ENCODE measurements at regions of chr5 and their contacts with region 1.

Region 1: GRCh38 chr5:134758504-134759341 is at the start of gene DDX46:
- DNase-seq: peak; percentile 89 to 97 (median 93)
- ATAC-seq: peak; percentile 99
- H3K4me3 ChIP-seq: peak within 1 kb of the TSS; percentile 91
- H3K4me3 Mint-ChIP-seq: peak within 1 kb of the TSS; percentile 100
- H3K27ac ChIP-seq: peak within 1 kb of the TSS; percentile 74 to 76
- H3K27ac Mint-ChIP-seq: peak within 1 kb of the TSS; percentile 95
- H3K4me1 ChIP-seq: peaks cover 22% of the 10 kb centered on the region
- H3K4me1 Mint-ChIP-seq: peaks cover 44% of the 10 kb centered on the region
- H3K27me3 ChIP-seq: no peaks in the 10 kb centered on the region
- H3K27me3 Mint-ChIP-seq: no peaks in the 10 kb centered on the region
- CTCF ChIP-seq: peak; percentile 89
- total RNA-seq, gene DDX46: 35.5 to 35.8 TPM

Region 2: GRCh38 chr5:132963175-132964104 is 1795.3 kb before region 1 on chr5 and contains the start of gene AFF4:
- CTCF ChIA-PET with region 1: no interaction called
- POLR2A ChIA-PET with region 1: no interaction called
- intact Hi-C with region 1: loop called in 1 of 2 experiments (anchors 5 kb)
- DNase-seq: peak; percentile 67 to 95 (median 80)
- ATAC-seq: peak; percentile 74
- H3K4me3 ChIP-seq: peak within 1 kb of the TSS; percentile 65
- H3K4me3 Mint-ChIP-seq: peak within 1 kb of the TSS; percentile 99
- H3K27ac ChIP-seq: peak within 1 kb of the TSS; percentile 92 to 96
- H3K27ac Mint-ChIP-seq: peak within 1 kb of the TSS; percentile 97
- H3K4me1 ChIP-seq: peaks cover 26% of the 10 kb centered on the region
- H3K4me1 Mint-ChIP-seq: peaks cover 39% of the 10 kb centered on the region
- H3K27me3 ChIP-seq: no peaks in the 10 kb centered on the region
- H3K27me3 Mint-ChIP-seq: no peaks in the 10 kb centered on the region
- CTCF ChIP-seq: no peak
- total RNA-seq, gene AFF4: 97.9 to 103 TPM

Region 3: GRCh38 chr5:134637161-134637582 is 121.6 kb before region 1 on chr5:
- CTCF ChIA-PET with region 1: interaction called, 3 read pairs
- POLR2A ChIA-PET with region 1: no interaction called
- intact Hi-C with region 1: loop called in 1 of 2 experiments (anchors 1 kb)
- DNase-seq: no peak
- ATAC-seq: no peak
- H3K4me3 ChIP-seq: no peak overlapping the region
- H3K4me3 Mint-ChIP-seq: no peak overlapping the region
- H3K27ac ChIP-seq: no peak overlapping the region
- H3K27ac Mint-ChIP-seq: no peak overlapping the region
- H3K4me1 ChIP-seq: peaks cover 8% of the 10 kb centered on the region
- H3K4me1 Mint-ChIP-seq: peaks cover 12% of the 10 kb centered on the region
- H3K27me3 ChIP-seq: no peaks in the 10 kb centered on the region
- H3K27me3 Mint-ChIP-seq: no peaks in the 10 kb centered on the region
- CTCF ChIP-seq: no peak

Region 4: DNA sequence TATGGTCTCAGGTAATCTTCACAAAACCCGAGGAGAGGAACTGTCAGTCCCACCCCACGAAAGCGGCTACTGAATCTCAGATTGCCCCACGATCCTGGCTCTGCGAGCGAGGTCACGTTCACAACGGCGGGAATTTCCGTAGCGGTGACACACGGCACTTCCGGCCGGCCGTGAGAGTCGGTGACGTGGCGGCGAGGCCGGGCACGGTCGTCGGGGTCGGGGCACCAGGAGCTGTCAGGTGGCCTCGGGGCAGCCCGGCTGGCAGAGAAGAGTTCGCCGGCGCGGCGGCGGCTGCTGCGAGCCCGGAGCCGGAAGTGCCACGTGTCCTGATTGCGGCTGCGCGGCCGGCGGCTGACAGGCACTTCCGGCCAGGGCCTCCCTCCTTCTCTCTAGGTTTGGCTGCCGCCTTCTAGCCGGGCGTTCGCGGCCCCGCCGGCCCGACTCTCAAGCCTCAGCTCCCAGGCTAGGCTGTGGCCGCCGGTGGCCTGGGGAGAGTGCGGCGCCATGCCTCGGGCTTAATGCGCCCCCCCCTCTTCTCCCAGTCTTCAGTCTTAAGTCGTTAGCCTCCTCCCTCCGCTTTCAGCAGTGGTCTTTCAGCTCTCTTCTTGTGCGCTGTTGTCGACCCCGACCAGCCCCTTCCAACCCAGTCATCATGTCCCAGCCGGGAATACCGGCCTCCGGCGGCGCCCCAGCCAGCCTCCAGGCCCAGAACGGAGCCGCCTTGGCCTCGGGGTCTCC is 110.1 kb before region 1 on chr5 and contains the start of gene SEC24A:
- CTCF ChIA-PET with region 1: no interaction called
- POLR2A ChIA-PET with region 1: no interaction called
- intact Hi-C with region 1: loop called in 1 of 2 experiments (anchors 2 kb)
- DNase-seq: peak; percentile 74 to 98 (median 82)
- ATAC-seq: peak; percentile 78
- H3K4me3 ChIP-seq: peak within 1 kb of the TSS; percentile 80
- H3K4me3 Mint-ChIP-seq: peak within 1 kb of the TSS; percentile 99
- H3K27ac ChIP-seq: peak within 1 kb of the TSS; percentile 93 to 98
- H3K27ac Mint-ChIP-seq: peak within 1 kb of the TSS; percentile 95
- H3K4me1 ChIP-seq: peaks cover 27% of the 10 kb centered on the region
- H3K4me1 Mint-ChIP-seq: peaks cover 31% of the 10 kb centered on the region
- H3K27me3 ChIP-seq: no peaks in the 10 kb centered on the region
- H3K27me3 Mint-ChIP-seq: no peaks in the 10 kb centered on the region
- CTCF ChIP-seq: no peak
- total RNA-seq, gene SEC24A: 11.7 to 12.3 TPM

Region 5: GRCh38 chr5:134845852-134846640 is 87.3 kb after region 1 on chr5 and contains the start of gene C5orf24:
- CTCF ChIA-PET with region 1: interaction called, 4 read pairs
- POLR2A ChIA-PET with region 1: interaction called, 8 read pairs
- intact Hi-C with region 1: loop called in 1 of 2 experiments (anchors 2 kb)
- DNase-seq: peak; percentile 83 to 98 (median 90)
- ATAC-seq: peak; percentile 90
- H3K4me3 ChIP-seq: peak within 1 kb of the TSS; percentile 76
- H3K4me3 Mint-ChIP-seq: peak within 1 kb of the TSS; percentile 86
- H3K27ac ChIP-seq: peak within 1 kb of the TSS; percentile 87
- H3K27ac Mint-ChIP-seq: peak within 1 kb of the TSS; percentile 95
- H3K4me1 ChIP-seq: peaks cover 35% of the 10 kb centered on the region
- H3K4me1 Mint-ChIP-seq: peaks cover 26% of the 10 kb centered on the region
- H3K27me3 ChIP-seq: no peaks in the 10 kb centered on the region
- H3K27me3 Mint-ChIP-seq: no peaks in the 10 kb centered on the region
- CTCF ChIP-seq: no peak
- total RNA-seq, gene C5orf24: 34.6 to 36.5 TPM

Measured in CD4-positive, alpha-beta T cell (primary cell).